ENCODE measurements at regions of chr3 and their contacts with region 1.

Region 1: DNA sequence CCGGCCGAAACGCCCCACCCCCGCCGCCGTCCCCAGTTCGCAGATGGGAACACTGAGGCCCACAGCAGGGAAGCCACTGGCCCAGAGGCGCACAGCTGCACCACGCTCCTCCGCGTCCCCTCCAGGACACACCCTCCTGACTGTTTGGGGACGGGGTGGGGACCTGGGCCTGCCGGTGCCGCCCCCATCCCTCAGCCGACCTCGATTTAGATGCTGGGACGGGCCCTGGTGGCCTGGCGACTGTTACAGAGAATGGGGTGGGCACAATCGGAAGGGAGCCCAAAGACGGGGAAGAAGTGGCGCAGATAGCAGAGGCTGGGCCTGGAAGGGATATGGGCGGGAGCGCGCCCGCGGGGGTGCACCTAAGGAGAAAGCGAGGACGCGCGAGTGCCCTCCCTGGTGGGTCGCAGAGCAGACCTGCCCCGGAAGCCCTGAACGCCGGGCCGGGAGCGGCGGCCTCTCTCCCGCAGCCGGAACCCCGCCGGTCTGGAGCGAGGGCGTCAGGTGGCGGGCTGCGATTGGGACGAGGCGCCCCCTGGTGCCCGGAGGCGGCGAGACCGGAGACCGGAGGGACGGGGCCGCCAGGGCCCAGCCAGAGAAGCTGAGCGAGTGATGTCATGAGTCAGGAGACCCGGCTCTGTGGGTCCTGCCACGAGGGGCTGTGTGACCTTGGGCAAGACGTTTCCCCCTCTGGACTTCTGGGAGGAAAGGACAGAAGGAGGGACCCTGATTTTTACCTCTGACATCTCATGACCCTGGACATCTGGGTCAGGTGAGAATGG is 78.4 kb downstream of the IQSEC1 start:
- DNase-seq: peak; percentile 85 to 92 (median 88)
- H3K4me3 ChIP-seq: peak overlapping the region; percentile 51
- H3K27ac ChIP-seq: peak overlapping the region; percentile 29 to 52
- H3K4me1 ChIP-seq: peaks cover 3% of the 10 kb centered on the region
- H3K27me3 ChIP-seq: no peaks in the 10 kb centered on the region
- CTCF ChIP-seq: peak; percentile 94 to 95 (median 95)
- EP300 ChIP-seq: no peak
- POLR2A ChIP-seq: peak; percentile 67

Region 2: GRCh38 chr3:12891985-12892839 is 102.6 kb before region 1 on chr3:
- intact Hi-C with region 1: loop called in 1 of 4 experiments (anchors 5 kb)
- DNase-seq: peak in 4 of 5 donors; percentile 54 to 61 (median 56)
- H3K4me3 ChIP-seq: no peak overlapping the region
- H3K27ac ChIP-seq: no peak overlapping the region
- H3K4me1 ChIP-seq: no peaks in the 10 kb centered on the region
- H3K27me3 ChIP-seq: no peaks in the 10 kb centered on the region
- CTCF ChIP-seq: peak; percentile 84 to 93 (median 91)
- EP300 ChIP-seq: no peak
- POLR2A ChIP-seq: no peak

Region 3: DNA sequence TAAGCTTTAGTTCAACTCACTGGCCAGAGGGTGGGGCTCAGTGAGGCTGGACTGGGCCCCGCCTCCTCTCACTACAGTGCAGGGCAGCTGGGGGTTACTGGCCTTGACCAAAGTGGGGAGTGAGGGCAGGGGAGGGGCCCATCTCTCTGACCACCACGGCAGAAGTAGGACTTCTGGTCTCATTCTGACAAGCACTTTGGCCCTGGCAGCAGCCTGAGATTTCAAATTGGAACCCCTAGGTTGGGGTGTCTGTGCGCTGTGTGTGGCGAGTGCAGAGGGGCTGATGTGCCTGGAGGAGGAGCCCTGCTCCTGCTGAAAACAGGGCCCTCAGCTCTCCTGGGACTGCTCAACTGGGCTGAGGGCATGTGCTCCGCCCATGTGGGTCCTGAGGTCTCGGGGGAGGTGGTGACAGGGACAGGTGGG is 93.2 kb before region 1 on chr3:
- intact Hi-C with region 1: loop called in 2 of 4 experiments (anchors 5 to 10 kb)
- DNase-seq: no peak
- H3K4me3 ChIP-seq: no peak overlapping the region
- H3K27ac ChIP-seq: no peak overlapping the region
- H3K4me1 ChIP-seq: no peaks in the 10 kb centered on the region
- H3K27me3 ChIP-seq: no peaks in the 10 kb centered on the region
- CTCF ChIP-seq: no peak
- EP300 ChIP-seq: no peak
- POLR2A ChIP-seq: no peak